ENCODE measurements at regions of chr1 and their contacts with region 1.

Region 1: DNA sequence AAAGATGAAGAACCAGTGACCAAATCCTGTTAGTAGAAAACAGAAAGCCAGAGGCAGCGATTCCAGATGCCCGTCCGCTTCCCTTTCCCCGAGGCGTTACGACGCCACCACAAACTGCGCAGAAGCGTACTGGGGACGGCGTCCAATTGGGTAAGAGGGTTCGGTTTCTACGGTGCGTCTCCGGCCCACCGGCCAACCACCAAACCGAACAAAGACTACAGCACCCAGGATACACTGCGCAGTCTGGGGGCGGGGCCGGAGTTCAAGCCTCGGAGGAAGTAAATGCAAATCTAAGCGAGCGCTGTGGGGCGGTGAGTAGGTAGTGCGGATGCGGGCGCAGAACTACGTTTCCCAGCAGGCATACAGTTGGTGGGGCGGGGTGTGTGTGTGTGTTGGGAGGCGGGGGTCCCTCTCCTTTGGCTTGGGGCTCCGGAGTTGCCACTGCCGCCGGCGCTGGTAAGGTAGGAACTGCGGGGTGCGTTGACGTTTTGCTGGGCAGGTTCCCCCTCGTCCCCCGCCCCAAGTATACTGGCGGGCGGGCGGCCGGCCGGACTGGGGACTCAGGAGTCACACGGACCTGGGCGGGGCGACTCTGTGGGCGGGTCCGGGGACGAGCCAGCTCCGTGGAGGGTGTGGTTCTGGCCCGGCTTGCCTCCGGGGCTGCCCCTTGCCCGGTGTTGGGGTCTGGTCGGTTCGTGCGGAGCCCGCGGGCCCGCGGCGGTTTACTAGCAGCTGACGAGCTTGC is at the starts of genes SWT1 and TRMT1L:
- DNase-seq: peak; percentile 100
- H3K4me3 ChIP-seq: peak within 1 kb of the TSS; percentile 91
- H3K27ac ChIP-seq: peak within 1 kb of the TSS; percentile 95
- H3K4me1 ChIP-seq: peaks cover 13% of the 10 kb centered on the region
- H3K27me3 ChIP-seq: no peaks in the 10 kb centered on the region
- CTCF ChIP-seq: no peak
- total RNA-seq, gene SWT1: 3.3 and 4.8 TPM in 2 replicates
- total RNA-seq, gene TRMT1L: 24.3 and 26.6 TPM in 2 replicates

Region 2: GRCh38 chr1:184973272-184974055 is 183.6 kb before region 1 on chr1:
- CTCF ChIA-PET with region 1: no interaction called
- POLR2A ChIA-PET with region 1: no interaction called
- intact Hi-C with region 1: loop called (anchors 5 kb)
- DNase-seq: peak; percentile 74
- H3K4me3 ChIP-seq: peak overlapping the region; percentile 84
- H3K27ac ChIP-seq: peak overlapping the region; percentile 92
- H3K4me1 ChIP-seq: peaks cover 26% of the 10 kb centered on the region
- H3K27me3 ChIP-seq: no peaks in the 10 kb centered on the region
- CTCF ChIP-seq: no peak

Region 3: DNA sequence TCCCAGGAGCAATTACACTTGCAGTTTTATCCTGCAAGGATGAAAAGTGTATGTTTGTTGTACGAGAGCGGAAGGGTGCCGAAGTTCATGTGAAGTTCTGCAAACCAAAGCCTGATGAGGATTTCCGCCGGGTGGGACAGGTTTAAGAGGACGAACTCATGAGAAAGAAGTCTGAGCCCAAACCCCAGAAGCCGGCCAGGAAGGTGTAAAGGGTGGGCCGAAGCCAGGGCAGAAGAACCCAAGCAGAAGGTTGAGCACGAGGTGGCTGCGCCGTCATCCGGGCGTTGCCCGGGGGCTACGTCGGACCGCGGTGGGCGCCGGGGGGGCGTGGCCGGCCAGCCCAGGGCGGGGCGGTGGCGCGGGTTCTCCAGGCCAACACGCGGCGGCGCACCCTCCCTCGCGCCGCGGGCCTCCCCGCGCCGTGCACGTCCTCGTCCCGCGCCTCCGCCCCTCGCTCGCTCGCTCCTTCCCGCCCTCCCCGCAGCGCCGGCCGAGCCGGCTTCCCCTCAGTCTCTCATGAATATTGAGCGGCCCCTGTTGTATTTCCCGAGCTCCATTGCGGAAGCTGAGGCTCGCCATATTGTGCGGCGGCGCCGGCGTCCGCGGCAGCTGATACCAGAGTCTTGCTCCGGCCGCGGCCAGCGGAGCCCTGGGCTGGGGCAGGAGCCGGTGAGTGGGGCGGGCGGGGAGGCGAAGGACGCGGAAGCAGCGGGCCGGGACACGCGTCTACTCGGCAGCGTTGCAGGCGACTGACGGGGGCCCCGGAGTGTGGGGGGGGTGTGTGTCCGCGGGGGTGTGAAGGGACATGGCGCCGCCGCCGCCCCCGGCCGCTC is 111.8 kb before region 1 on chr1 and contains the start of gene RNF2:
- CTCF ChIA-PET with region 1: no interaction called
- POLR2A ChIA-PET with region 1: no interaction called
- intact Hi-C with region 1: loop called (anchors 5 kb)
- DNase-seq: peak; percentile 95
- H3K4me3 ChIP-seq: peak within 1 kb of the TSS; percentile 90
- H3K27ac ChIP-seq: peak within 1 kb of the TSS; percentile 82
- H3K4me1 ChIP-seq: peaks cover 22% of the 10 kb centered on the region
- H3K27me3 ChIP-seq: no peaks in the 10 kb centered on the region
- CTCF ChIP-seq: no peak
- total RNA-seq, gene RNF2: 50.8 and 53.9 TPM in 2 replicates

Region 4: DNA sequence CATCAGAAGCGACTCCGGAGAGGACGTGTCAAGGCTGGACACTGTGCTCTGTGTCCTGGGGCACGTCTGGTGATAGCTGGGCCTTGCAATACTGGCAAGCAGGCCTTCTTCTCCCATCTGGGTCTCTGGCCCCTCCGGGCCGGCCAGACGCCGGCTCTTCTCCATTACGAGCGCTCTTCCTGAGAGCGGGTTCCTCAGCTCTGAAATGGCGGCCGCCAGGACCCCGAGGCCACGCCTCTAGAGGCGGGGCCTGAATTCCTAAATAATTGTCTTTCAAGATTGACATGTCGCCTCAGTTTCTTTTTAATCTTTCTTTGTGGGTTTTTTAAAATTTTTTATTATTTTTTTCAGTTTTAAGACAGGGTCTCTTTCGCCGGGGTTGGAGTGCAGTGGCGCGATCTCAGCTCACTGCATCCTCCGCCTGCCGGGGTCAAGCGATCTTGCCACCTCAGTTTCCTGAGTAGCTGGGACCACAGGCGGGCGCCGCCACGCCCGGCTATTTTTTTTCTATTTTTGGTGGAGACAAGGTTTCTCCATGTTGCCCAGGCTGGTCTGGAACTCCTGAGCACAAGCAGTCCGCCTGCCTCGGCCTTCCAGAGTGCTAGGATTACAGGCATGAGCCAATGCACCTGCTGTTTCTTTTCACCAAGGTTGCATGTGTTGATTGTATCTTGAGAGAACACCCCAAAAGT is 102.5 kb before region 1 on chr1:
- CTCF ChIA-PET with region 1: no interaction called
- POLR2A ChIA-PET with region 1: interaction called, 15 read pairs
- intact Hi-C with region 1: loop called (anchors 5 kb)
- DNase-seq: no peak
- H3K4me3 ChIP-seq: no peak overlapping the region
- H3K27ac ChIP-seq: no peak overlapping the region
- H3K4me1 ChIP-seq: peaks cover 32% of the 10 kb centered on the region
- H3K27me3 ChIP-seq: no peaks in the 10 kb centered on the region
- CTCF ChIP-seq: no peak

Region 5: DNA sequence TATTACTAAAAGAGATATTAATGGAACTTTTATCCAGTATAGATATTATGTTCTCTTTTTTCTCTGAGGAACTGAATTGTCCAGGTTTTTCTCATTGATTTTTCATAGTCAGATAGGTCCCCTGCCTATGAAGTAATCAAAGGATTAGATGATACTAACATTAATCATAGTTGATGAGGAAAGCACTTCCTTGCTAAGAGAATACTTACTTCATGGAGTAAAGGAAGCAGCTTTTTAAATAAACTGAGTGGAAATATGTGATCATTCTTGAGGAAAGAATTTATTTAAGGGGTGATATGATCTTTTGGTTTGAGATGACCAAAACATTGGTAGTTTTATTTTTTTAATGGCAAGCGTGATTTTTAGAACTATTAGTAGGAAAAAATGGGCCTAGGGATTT is 58.9 kb after region 1 on chr1:
- CTCF ChIA-PET with region 1: no interaction called
- POLR2A ChIA-PET with region 1: no interaction called
- intact Hi-C with region 1: no loop called
- DNase-seq: no peak
- H3K4me3 ChIP-seq: no peak overlapping the region
- H3K27ac ChIP-seq: no peak overlapping the region
- H3K4me1 ChIP-seq: no peaks in the 10 kb centered on the region
- H3K27me3 ChIP-seq: no peaks in the 10 kb centered on the region
- CTCF ChIP-seq: no peak

Region 6: GRCh38 chr1:187157552-187157951 is 2000.5 kb after region 1 on chr1:
- CTCF ChIA-PET with region 1: no interaction called
- POLR2A ChIA-PET with region 1: no interaction called
- intact Hi-C with region 1: no loop called
- DNase-seq: peak; percentile 28
- H3K4me3 ChIP-seq: no peak overlapping the region
- H3K27ac ChIP-seq: no peak overlapping the region
- H3K4me1 ChIP-seq: no peaks in the 10 kb centered on the region
- H3K27me3 ChIP-seq: no peaks in the 10 kb centered on the region
- CTCF ChIP-seq: no peak